ENCODE measurements at regions of chr5 and their contacts with region 1.

Region 1: GRCh38 chr5:170312666-170313065 is 15.1 kb upstream of the LCP2 start:
- DNase-seq: peak; percentile 88
- H3K4me3 Mint-ChIP-seq: peak overlapping the region; percentile 79
- H3K27ac Mint-ChIP-seq: peak overlapping the region; percentile 95
- H3K4me1 Mint-ChIP-seq: peaks cover 51% of the 10 kb centered on the region
- H3K27me3 Mint-ChIP-seq: no peaks in the 10 kb centered on the region

Region 2: GRCh38 chr5:168486136-168486879 is 1826.4 kb before region 1 on chr5 and contains the start of gene RARS1:
- CTCF ChIA-PET with region 1: no interaction called
- POLR2A ChIA-PET with region 1: no interaction called
- intact Hi-C with region 1: loop called (anchors 5 kb)
- DNase-seq: peak; percentile 96
- H3K4me3 Mint-ChIP-seq: peak within 1 kb of the TSS; percentile 99
- H3K27ac Mint-ChIP-seq: peak within 1 kb of the TSS; percentile 89
- H3K4me1 Mint-ChIP-seq: peaks cover 37% of the 10 kb centered on the region
- H3K27me3 Mint-ChIP-seq: no peaks in the 10 kb centered on the region
- total RNA-seq, gene RARS1: 98.6 to 101 TPM

Region 3: GRCh38 chr5:170111088-170111785 is 201.4 kb before region 1 on chr5:
- CTCF ChIA-PET with region 1: no interaction called
- POLR2A ChIA-PET with region 1: no interaction called
- intact Hi-C with region 1: no loop called
- DNase-seq: no peak
- H3K4me3 Mint-ChIP-seq: no peak overlapping the region
- H3K27ac Mint-ChIP-seq: no peak overlapping the region
- H3K4me1 Mint-ChIP-seq: no peaks in the 10 kb centered on the region
- H3K27me3 Mint-ChIP-seq: peaks cover 2% of the 10 kb centered on the region

Region 4: DNA sequence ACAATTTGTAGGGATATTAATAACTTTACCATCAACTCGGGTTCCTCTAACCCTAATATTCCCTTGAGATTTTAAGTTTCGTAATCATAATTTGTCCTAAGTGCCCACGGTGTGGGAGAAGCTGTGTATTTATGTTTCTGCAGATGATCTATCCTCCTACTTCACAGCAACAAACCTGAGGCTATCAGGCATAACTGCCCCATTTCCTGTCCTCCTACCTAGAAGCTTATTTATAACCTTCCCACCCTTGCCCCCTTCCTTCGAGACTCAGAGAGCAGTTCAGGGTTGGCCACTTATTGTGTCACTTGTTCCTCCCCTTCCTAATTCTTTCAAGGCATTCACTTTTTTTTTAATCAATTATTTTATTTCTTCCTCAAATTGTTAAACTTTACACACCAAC is 14.5 kb after region 1 on chr5:
- CTCF ChIA-PET with region 1: interaction called, 20 read pairs
- POLR2A ChIA-PET with region 1: interaction called, 38 read pairs
- intact Hi-C with region 1: loop called (anchors 1 kb)
- DNase-seq: no peak
- H3K4me3 Mint-ChIP-seq: no peak overlapping the region
- H3K27ac Mint-ChIP-seq: no peak overlapping the region
- H3K4me1 Mint-ChIP-seq: peaks cover 9% of the 10 kb centered on the region
- H3K27me3 Mint-ChIP-seq: no peaks in the 10 kb centered on the region

Region 5: DNA sequence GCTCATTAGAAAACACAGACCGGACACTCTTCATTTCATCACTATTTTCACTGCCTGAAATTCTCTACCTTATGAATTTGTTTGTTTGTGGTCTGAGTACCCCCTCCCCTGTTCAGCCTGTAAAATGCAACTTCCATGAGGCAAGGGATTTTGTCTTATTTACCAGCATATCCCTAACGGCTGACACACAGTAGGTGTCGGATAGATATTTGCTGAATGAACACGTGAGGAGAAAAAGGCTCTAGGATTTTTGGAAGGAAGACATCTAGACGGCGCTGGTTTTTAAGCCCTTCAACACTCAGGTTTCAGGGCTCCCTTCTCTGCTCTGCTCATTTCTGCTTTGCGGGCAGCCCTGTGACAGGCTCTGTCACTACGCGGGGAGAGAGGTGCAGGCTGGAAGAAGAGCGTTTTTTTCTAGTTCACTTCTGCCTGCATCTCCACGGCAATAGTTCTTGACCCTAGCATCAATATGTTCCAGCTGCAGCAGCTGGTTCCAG is 35.5 kb after region 1 on chr5:
- CTCF ChIA-PET with region 1: no interaction called
- POLR2A ChIA-PET with region 1: no interaction called
- intact Hi-C with region 1: no loop called
- DNase-seq: no peak
- H3K4me3 Mint-ChIP-seq: no peak overlapping the region
- H3K27ac Mint-ChIP-seq: no peak overlapping the region
- H3K4me1 Mint-ChIP-seq: no peaks in the 10 kb centered on the region
- H3K27me3 Mint-ChIP-seq: peaks cover 11% of the 10 kb centered on the region

Measured in activated CD4-positive, alpha-beta memory T cell treated with anti-CD3 and anti-CD28 coated beads for 36 hours (primary cell).